A673 (cell line): ENCODE measurements at regions of chr4 and their contacts with region 1.

Region 1: GRCh38 chr4:17339368-17339767 is 172.5 kb downstream of the QDPR start:
- DNase-seq: no peak
- H3K4me3 ChIP-seq: no peak overlapping the region
- H3K27ac ChIP-seq: no peak overlapping the region
- H3K4me1 ChIP-seq: no peaks in the 10 kb centered on the region
- H3K27me3 ChIP-seq: no peaks in the 10 kb centered on the region
- CTCF ChIP-seq: no peak

Region 2: GRCh38 chr4:17309567-17310268 is 29.6 kb before region 1 on chr4:
- CTCF ChIA-PET with region 1: interaction called, 10 read pairs
- POLR2A ChIA-PET with region 1: no interaction called
- intact Hi-C with region 1: no loop called
- DNase-seq: no peak
- H3K4me3 ChIP-seq: no peak overlapping the region
- H3K27ac ChIP-seq: no peak overlapping the region
- H3K4me1 ChIP-seq: no peaks in the 10 kb centered on the region
- H3K27me3 ChIP-seq: no peaks in the 10 kb centered on the region
- CTCF ChIP-seq: no peak